Activated CD4-positive, alpha-beta memory T cell treated with anti-CD3 and anti-CD28 coated beads, Interleukin-2, amount 10 ng/mL, durations not matched to agents 7 days and 5 days (primary cell): ENCODE measurements at regions of chr1 and their contacts with region 1.

Region 1: DNA sequence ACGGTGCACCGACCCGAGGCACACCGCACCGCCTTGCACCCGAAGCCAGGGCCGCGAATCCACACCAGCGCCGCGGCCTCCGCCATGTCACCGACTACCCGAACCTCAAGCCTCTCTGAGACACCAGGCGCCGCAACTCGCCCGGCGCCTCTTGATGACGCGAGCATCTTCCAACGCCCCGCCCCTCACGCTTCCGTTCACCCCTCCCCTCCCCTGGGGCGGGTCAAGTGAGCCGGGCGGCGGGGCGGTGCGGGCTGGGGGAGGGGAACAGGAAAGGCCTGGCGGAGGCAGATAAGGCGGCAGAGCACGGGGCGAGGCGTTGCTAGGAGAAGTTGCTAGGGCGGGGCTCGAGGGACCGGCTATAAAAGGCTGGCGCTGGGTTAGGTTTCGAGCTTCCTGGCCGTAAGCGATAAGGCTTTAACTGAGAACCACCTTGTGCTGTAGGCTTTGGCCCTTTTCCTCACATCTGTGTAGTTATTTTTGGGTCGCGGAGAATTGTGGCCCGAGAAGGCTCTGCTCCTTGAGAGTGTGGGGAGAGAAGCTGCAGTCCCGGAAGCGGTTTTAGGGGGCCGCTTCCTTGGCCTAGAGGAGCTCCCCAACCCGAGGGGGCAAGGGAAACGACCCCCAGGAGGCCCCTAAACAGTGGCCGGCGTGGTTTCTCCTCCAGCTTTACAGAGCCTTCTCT is at the start of gene SDE2:
- DNase-seq: peak; percentile 100
- H3K4me3 Mint-ChIP-seq: peak within 1 kb of the TSS; percentile 100
- H3K27ac Mint-ChIP-seq: peak within 1 kb of the TSS; percentile 100
- H3K4me1 Mint-ChIP-seq: peaks cover 71% of the 10 kb centered on the region
- H3K27me3 Mint-ChIP-seq: no peaks in the 10 kb centered on the region
- total RNA-seq, gene SDE2: 19.8 to 20.1 TPM

Region 2: GRCh38 chr1:225131869-225132268 is 867.5 kb before region 1 on chr1:
- CTCF ChIA-PET with region 1: no interaction called
- POLR2A ChIA-PET with region 1: no interaction called
- DNase-seq: no peak
- H3K4me3 Mint-ChIP-seq: no peak overlapping the region
- H3K27ac Mint-ChIP-seq: no peak overlapping the region
- H3K4me1 Mint-ChIP-seq: no peaks in the 10 kb centered on the region
- H3K27me3 Mint-ChIP-seq: no peaks in the 10 kb centered on the region

Region 3: GRCh38 chr1:225441314-225442122 is 557.9 kb before region 1 on chr1:
- CTCF ChIA-PET with region 1: no interaction called
- POLR2A ChIA-PET with region 1: interaction called, 18 read pairs
- DNase-seq: no peak
- H3K4me3 Mint-ChIP-seq: peak overlapping the region; percentile 38
- H3K27ac Mint-ChIP-seq: peak overlapping the region; percentile 71
- H3K4me1 Mint-ChIP-seq: peaks cover 56% of the 10 kb centered on the region
- H3K27me3 Mint-ChIP-seq: no peaks in the 10 kb centered on the region

Region 4: GRCh38 chr1:225881969-225882693 is 117.2 kb before region 1 on chr1 and contains the start of gene TMEM63A:
- CTCF ChIA-PET with region 1: no interaction called
- POLR2A ChIA-PET with region 1: interaction called, 18 read pairs
- DNase-seq: peak; percentile 90
- H3K4me3 Mint-ChIP-seq: peak within 1 kb of the TSS; percentile 89
- H3K27ac Mint-ChIP-seq: peak within 1 kb of the TSS; percentile 88
- H3K4me1 Mint-ChIP-seq: peaks cover 50% of the 10 kb centered on the region
- H3K27me3 Mint-ChIP-seq: peaks cover 9% of the 10 kb centered on the region
- total RNA-seq, gene TMEM63A: 126 to 127 TPM

Region 5: DNA sequence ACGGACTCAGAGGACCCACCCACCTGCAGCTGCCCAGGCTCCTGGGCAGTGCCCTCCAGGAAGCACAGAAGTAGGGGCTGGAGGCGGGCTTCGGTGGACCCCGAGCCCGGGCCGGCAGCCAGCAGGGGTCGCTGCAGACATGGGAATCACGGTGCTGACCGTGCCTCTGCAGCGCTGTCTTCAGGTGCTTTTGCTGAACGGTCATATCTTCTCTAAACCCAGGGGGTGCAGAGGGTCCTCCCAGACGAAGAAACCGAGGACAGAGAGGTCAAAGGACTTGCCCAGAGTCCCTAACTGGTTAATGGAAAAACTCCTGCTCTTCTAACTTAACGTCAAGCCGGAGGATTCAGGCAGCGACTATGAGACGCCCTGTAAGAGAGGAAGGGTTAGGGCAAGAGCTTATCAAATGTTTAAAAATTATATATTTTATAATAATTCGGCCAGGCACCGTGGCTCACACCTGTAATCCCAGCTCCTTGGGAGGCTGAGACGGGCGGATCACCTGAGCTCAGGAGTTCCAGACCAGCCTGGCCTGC is 36.9 kb before region 1 on chr1:
- CTCF ChIA-PET with region 1: no interaction called
- POLR2A ChIA-PET with region 1: no interaction called
- DNase-seq: peak; percentile 60
- H3K4me3 Mint-ChIP-seq: no peak overlapping the region
- H3K27ac Mint-ChIP-seq: no peak overlapping the region
- H3K4me1 Mint-ChIP-seq: no peaks in the 10 kb centered on the region
- H3K27me3 Mint-ChIP-seq: no peaks in the 10 kb centered on the region

Region 6: DNA sequence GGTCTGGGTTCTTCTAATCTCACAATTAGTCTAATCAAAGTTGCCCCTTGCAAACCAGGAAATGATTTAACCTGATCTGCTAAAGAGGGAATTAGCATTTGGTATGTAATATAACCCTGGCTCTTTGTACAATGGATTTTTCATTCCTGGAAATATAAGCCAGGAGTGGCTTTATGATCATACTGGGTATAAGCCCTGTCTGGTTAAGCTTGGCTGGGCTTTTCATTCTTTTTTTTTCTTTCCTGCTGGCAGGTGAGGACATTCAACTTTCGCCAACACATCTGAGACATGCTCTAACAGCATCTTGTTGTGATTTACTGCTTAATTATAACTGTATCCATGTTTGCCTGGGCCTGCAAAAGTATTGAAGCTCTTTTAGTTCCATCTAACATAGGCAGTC is 20.2 kb after region 1 on chr1:
- CTCF ChIA-PET with region 1: no interaction called
- POLR2A ChIA-PET with region 1: interaction called, 11 read pairs
- DNase-seq: no peak
- H3K4me3 Mint-ChIP-seq: no peak overlapping the region
- H3K27ac Mint-ChIP-seq: no peak overlapping the region
- H3K4me1 Mint-ChIP-seq: no peaks in the 10 kb centered on the region
- H3K27me3 Mint-ChIP-seq: peaks cover under 1% of the 10 kb centered on the region

Region 7: GRCh38 chr1:226109829-226110248 is 110.5 kb after region 1 on chr1:
- CTCF ChIA-PET with region 1: no interaction called
- POLR2A ChIA-PET with region 1: interaction called, 20 read pairs
- DNase-seq: peak; percentile 84
- H3K4me3 Mint-ChIP-seq: peak overlapping the region; percentile 87
- H3K27ac Mint-ChIP-seq: peak overlapping the region; percentile 78
- H3K4me1 Mint-ChIP-seq: peaks cover 19% of the 10 kb centered on the region
- H3K27me3 Mint-ChIP-seq: no peaks in the 10 kb centered on the region

Region 8: GRCh38 chr1:226176870-226177269 is 177.5 kb after region 1 on chr1:
- CTCF ChIA-PET with region 1: no interaction called
- POLR2A ChIA-PET with region 1: no interaction called
- DNase-seq: no peak
- H3K4me3 Mint-ChIP-seq: no peak overlapping the region
- H3K27ac Mint-ChIP-seq: no peak overlapping the region
- H3K4me1 Mint-ChIP-seq: peaks cover 22% of the 10 kb centered on the region
- H3K27me3 Mint-ChIP-seq: no peaks in the 10 kb centered on the region

Region 9: DNA sequence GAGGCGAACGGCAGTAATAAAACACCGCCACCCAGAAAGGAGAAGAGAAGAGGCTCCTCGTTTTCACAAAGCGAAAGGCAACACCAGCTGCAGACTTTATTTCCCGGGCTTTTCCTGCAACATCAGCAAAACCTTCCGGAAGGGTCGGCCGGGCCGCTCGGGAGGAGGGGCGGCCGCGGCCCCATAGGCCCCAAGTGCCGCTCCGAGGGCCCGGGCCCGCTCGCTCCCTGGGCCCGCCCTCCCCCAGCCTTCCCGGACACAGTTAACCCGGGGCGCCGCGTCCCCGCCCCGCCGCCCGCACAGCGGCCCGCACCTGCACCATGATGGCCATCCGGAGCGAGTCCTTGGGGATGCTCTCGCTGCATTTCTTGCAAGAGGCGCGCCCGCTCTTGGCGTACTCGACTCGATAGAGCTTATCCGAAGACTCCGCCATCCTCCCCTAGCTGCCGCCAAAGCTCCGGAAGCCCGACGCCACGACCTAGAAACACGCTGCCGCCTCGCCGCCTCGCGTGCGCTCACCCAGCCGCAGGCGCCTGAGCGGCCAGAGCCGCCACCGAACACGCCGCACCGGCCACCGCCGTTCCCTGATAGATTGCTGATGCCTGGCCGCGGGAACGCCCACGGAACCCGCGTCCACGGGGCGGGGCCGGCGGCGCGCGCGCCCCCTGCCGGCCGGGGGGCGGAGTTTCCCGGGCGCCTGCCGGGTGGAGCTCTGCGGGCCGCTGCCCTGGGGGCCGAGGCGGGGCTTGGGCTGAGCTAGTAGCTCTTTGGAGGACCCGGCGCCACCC is 408.3 kb after region 1 on chr1 and contains the start of gene PARP1:
- CTCF ChIA-PET with region 1: interaction called, 5 read pairs
- POLR2A ChIA-PET with region 1: interaction called, 19 read pairs
- DNase-seq: peak; percentile 92
- H3K4me3 Mint-ChIP-seq: peak within 1 kb of the TSS; percentile 85
- H3K27ac Mint-ChIP-seq: peak within 1 kb of the TSS; percentile 89
- H3K4me1 Mint-ChIP-seq: peaks cover 35% of the 10 kb centered on the region
- H3K27me3 Mint-ChIP-seq: peaks cover 2% of the 10 kb centered on the region
- total RNA-seq, gene PARP1: 191 to 194 TPM